Heart right ventricle (tissue), 16 donors: ENCODE measurements at regions of chr6 and their contacts with region 1.

Region 1: DNA sequence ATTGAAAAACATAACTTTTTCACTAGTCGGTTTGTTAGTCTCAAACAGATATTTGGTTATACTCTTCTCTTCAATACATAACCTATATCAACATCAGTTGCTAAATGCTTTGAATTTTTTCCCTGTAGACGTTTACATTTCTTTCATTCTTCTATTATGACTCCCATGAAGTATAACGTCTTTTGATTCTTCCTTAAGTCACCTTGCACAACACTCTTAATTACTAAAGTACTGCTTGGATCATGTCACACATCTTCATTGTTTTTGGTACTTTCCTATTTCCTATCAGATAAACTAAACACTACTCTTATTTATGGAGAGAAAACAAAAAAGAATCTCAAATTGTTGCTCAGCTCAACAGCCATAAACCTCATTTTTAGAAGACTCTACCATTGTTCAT is 23.0 kb upstream of the BMP5 start:
- DNase-seq: no peak
- ATAC-seq: no peak
- H3K4me3 ChIP-seq: no peak overlapping the region
- H3K27ac ChIP-seq: no peak overlapping the region
- H3K4me1 ChIP-seq: no peaks in the 10 kb centered on the region
- H3K27me3 ChIP-seq: no peaks in the 10 kb centered on the region
- CTCF ChIP-seq: no peak

Region 2: DNA sequence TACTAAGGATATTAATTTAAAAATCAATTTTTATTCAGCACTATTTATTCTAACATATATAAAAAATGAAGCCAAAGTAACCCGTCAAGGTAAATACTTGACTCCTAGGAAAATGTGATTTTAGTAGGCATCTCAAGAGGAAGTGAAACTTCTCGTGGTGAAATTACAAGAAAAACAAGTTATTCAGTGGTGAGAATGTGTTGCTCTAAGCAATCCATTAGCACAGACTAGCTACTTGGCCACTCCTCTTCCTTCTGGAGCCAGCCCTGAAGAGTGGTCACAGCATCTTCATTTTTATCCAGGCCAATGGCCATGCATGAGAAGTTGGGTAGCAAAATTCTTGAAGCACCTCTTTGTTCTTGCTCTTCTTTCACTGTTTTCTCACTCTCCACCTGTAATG is 611.5 kb before region 1 on chr6:
- intact Hi-C with region 1: loop called in 1 of 10 experiments (anchors 10 kb)
- DNase-seq: no peak
- ATAC-seq: no peak
- H3K4me3 ChIP-seq: no peak overlapping the region
- H3K27ac ChIP-seq: no peak overlapping the region
- H3K4me1 ChIP-seq: no peaks in the 10 kb centered on the region
- H3K27me3 ChIP-seq: no peaks in the 10 kb centered on the region
- CTCF ChIP-seq: no peak